MCF 10A (cell line): ENCODE measurements at regions of chr3 and their contacts with region 1.

Region 1: GRCh38 chr3:58630076-58630709 is 36.4 kb downstream of the FAM3D start:
- DNase-seq: peak; percentile 75
- H3K4me3 Mint-ChIP-seq: no peak overlapping the region
- H3K27ac Mint-ChIP-seq: no peak overlapping the region
- H3K4me1 Mint-ChIP-seq: peaks cover 5% of the 10 kb centered on the region
- H3K27me3 Mint-ChIP-seq: no peaks in the 10 kb centered on the region
- CTCF ChIP-seq: peak; percentile 94

Region 2: DNA sequence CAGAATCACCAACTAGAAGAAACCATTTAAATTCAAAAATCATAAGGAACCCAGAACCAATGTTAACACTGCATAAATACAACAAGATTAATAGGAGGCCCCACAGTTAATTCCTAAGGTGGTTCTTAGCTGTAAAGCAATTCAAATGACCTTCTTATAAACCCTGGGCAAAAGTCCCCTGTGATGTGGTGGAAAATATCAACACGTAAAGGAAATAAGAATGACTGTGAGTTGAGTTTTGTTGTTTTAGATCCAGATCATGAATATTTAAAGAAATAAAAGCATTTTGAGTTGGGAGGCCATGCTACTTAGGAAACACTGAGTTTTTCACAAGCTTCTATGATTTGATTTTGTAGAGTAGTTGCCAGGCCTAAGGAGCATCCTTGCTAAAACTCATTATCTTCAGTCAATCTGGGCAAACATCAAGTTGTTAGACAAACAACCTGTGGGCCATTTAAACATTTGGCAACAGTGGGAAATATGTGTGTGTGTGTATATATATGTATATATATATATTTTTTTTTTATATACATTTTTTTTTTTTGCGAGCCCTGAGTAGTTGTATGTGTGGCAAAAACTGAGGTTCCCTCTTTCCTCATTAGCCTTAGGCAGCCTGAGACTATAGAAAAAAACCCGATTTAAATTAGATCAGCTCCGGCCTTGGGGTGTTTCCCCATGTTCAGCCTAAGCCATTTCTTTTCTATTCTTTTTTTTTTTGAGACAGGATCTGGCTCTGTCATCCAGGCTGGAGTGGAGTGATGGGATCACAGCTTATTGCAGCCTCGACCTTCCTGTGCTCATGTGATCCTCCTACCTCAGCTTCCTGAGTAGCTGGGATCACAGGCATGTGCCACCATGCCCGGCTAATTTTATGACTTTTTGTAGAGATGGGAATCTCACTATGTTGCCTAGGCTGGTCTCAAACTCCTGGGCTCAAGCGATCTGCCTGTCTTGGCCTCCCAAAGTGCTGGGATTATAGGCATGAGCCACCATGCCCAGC is 305.5 kb before region 1 on chr3:
- CTCF ChIA-PET with region 1: interaction called, 8 read pairs
- POLR2A ChIA-PET with region 1: no interaction called
- intact Hi-C with region 1: loop called (anchors 2 kb)
- DNase-seq: no peak
- H3K4me3 Mint-ChIP-seq: no peak overlapping the region
- H3K27ac Mint-ChIP-seq: no peak overlapping the region
- H3K4me1 Mint-ChIP-seq: no peaks in the 10 kb centered on the region
- H3K27me3 Mint-ChIP-seq: no peaks in the 10 kb centered on the region
- CTCF ChIP-seq: no peak

Region 3: DNA sequence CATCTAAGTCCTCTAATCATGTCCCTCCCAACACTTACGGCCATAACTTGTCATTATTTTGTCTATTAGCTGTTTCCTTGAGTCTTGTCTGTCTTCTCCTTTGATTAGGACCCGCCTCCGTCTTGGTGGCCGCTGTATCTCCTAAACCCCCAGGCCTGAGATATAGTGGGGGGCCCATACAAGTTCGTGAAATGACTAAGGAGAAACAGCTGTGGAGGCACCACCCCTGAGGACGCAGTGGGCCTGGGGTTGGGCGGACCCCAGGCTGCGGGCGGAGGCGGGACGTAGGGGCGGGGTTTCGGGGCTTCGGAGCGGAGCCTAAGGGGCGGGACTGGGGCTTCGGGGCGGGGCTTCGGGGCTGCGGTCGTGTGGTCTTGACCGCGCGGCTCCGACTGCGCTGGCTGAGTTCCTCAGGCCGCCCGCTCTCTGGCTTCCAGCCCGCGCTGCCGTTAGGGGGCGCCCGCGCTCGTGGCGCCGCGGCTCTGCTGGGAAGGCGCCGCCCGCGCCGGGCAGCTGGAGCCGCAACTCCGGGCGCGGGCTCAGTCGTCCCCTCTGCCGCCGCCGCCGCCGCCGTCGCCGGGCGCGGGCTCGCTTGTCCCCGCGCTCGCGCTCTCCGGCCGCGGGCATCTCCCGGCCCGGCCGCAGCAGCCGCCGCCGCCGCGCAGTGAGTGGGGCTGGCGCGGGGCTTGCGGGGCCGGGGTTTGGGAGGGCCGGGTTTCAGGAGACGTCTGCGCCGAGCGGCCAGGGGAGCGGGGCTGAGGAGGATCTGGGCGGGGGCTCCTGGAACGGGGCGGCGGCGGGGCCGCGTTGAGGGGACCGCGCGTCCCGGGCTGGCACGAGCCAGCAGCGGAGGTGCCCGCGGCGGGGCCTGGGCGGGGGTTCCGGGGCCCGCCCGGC is 138.4 kb before region 1 on chr3 and contains the start of gene KCTD6:
- CTCF ChIA-PET with region 1: interaction called, 31 read pairs
- POLR2A ChIA-PET with region 1: interaction called, 3 read pairs
- intact Hi-C with region 1: no loop called
- DNase-seq: peak; percentile 91
- H3K4me3 Mint-ChIP-seq: peak within 1 kb of the TSS; percentile 78
- H3K27ac Mint-ChIP-seq: peak within 1 kb of the TSS; percentile 50
- H3K4me1 Mint-ChIP-seq: peaks cover 33% of the 10 kb centered on the region
- H3K27me3 Mint-ChIP-seq: no peaks in the 10 kb centered on the region
- CTCF ChIP-seq: peak; percentile 73
- total RNA-seq, gene KCTD6: 9.9 and 10.6 TPM in 2 replicates

Region 4: DNA sequence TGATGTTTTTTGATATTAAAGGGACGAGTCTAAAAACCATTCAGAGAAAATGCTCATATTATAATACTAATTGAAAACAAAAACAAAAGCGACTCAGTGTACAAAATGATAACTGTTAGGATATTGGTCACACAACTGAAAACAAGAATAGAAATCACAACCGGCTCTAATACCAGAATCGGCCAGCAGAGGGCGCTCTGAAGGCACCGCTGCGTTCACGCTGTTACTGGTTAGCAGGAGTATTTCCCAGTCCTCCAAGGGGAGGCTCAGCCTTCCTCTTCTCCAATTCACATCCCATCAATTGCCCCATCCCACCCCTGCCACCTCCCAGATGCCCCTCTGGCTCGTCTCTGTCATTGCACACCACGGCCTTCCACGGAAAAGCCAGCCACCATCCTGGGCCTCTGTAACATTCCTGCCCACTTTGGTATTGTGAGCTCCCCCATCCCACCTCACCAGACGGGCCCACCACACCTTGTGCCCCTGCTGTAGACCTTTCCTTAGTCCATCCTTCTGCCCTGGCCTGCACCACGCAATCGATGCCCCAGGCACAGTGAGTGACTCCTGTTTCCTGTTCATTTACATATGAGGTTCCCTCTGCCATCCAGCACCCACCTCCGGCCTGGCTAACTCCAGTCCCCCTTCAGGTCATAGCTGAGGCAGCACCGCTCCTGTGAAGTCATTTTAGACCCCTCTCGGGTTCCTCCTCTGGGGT is 61.5 kb before region 1 on chr3:
- CTCF ChIA-PET with region 1: interaction called, 358 read pairs
- POLR2A ChIA-PET with region 1: interaction called, 4 read pairs
- intact Hi-C with region 1: loop called (anchors 1 kb)
- DNase-seq: peak; percentile 67
- H3K4me3 Mint-ChIP-seq: no peak overlapping the region
- H3K27ac Mint-ChIP-seq: peak overlapping the region; percentile 77
- H3K4me1 Mint-ChIP-seq: peaks cover 16% of the 10 kb centered on the region
- H3K27me3 Mint-ChIP-seq: no peaks in the 10 kb centered on the region
- CTCF ChIP-seq: peak; percentile 89

Region 5: GRCh38 chr3:58617338-58617761 is 12.8 kb before region 1 on chr3:
- CTCF ChIA-PET with region 1: interaction called, 44 read pairs
- POLR2A ChIA-PET with region 1: interaction called, 3 read pairs
- intact Hi-C with region 1: no loop called
- DNase-seq: no peak
- H3K4me3 Mint-ChIP-seq: no peak overlapping the region
- H3K27ac Mint-ChIP-seq: no peak overlapping the region
- H3K4me1 Mint-ChIP-seq: no peaks in the 10 kb centered on the region
- H3K27me3 Mint-ChIP-seq: no peaks in the 10 kb centered on the region
- CTCF ChIP-seq: no peak